ENCODE measurements at regions of chr13 and their contacts with region 1.

Region 1: GRCh38 chr13:99075268-99076191 is 97.7 kb upstream of the DOCK9 start:
- DNase-seq: no peak
- H3K4me3 Mint-ChIP-seq: peak overlapping the region; percentile 62
- H3K27ac Mint-ChIP-seq: peak overlapping the region; percentile 89
- H3K4me1 Mint-ChIP-seq: peaks cover 60% of the 10 kb centered on the region
- H3K27me3 Mint-ChIP-seq: no peaks in the 10 kb centered on the region

Region 2: DNA sequence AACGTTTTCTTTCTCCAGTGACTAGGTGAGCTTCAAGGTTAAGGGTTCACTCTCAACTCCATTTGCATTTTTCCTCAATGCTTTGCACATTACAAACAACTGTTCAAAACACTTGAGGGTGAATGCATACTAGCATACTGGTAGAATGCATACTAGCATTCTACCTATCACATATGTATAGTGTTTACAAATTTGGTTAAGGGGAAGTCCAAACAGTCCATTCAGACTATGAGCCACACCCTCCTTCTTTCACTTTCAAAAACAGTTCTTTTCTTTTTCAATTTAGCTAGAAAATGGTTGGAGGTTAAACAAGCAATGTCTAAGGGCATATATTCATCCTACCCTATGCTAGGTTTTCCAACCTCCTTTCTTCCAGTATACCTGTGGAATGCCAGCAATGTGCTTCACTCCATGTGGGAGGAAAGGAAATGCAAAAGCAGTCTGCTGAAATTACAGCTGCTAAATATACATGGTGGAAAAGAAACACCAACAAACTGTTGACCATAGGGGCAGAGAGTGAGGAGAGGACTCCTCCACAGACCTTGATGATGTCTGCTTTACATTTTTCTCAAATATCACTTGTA is 200.3 kb before region 1 on chr13:
- CTCF ChIA-PET with region 1: no interaction called
- intact Hi-C with region 1: loop called (anchors 2 kb)
- DNase-seq: no peak
- H3K4me3 Mint-ChIP-seq: no peak overlapping the region
- H3K27ac Mint-ChIP-seq: peak overlapping the region; percentile 10
- H3K4me1 Mint-ChIP-seq: peaks cover 23% of the 10 kb centered on the region
- H3K27me3 Mint-ChIP-seq: no peaks in the 10 kb centered on the region

Region 3: DNA sequence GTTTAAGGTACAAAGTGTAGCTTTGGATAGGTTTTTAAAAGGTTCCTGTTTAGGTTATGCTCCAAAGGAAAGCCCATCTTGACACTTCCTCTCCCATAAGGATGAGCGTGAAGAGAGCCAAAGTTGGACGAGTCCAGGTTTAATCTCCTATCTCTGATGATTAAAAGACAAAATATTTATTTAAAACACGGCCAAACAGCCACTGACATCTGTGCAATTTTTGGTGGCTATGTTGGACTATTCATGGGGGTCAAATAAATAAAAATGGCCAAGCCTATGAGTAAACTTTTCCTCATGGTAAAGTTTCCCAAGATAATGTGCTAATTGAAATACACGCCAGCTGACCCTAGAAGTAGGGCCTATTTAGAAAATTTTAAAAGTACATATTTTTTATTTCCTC is 28.7 kb before region 1 on chr13:
- CTCF ChIA-PET with region 1: interaction called, 5 read pairs
- intact Hi-C with region 1: loop called (anchors 1 kb)
- DNase-seq: no peak
- H3K4me3 Mint-ChIP-seq: peak overlapping the region; percentile 68
- H3K27ac Mint-ChIP-seq: peak overlapping the region; percentile 95
- H3K4me1 Mint-ChIP-seq: peaks cover 91% of the 10 kb centered on the region
- H3K27me3 Mint-ChIP-seq: no peaks in the 10 kb centered on the region

Measured in activated naive CD4-positive, alpha-beta T cell treated with anti-CD3 and anti-CD28 coated beads for 36 hours (primary cell).